ENCODE measurements at regions of chr18 and their contacts with region 1.

Region 1: GRCh38 chr18:12271376-12272235 is 17.4 kb downstream of the CIDEA start:
- DNase-seq: peak; percentile 55
- H3K4me3 Mint-ChIP-seq: peak overlapping the region; percentile 43
- H3K27ac Mint-ChIP-seq: no peak overlapping the region
- H3K4me1 Mint-ChIP-seq: peaks cover 2% of the 10 kb centered on the region
- H3K27me3 Mint-ChIP-seq: peaks cover 14% of the 10 kb centered on the region

Region 2: DNA sequence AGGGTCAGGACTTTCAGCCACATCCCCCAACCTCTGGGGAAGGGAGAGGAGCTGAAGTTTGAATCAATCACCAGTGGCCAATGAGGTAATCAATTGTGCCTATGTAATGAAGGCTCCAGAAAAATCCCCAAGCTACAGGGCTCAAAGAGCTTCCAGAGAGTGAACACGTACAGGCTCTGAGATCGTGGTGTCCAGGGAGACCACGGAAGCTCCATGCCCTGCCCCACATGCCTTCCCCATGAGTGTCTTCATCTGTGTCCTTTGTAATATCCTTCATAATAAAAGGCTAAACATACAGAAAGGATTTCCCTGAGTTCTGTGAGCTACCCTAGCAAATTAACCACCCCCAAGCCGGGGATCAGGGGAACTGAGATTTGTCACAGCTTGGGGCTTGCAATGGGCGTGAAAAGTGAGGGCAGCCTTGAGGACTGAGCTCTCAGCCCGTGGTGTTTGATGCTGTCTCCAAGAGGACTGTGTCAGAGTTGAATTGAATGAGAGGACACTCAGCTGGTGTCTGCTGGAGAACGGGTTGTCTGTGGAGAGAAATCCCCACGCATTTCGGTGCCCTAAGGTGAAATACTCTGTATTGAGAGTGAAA is 10.9 kb after region 1 on chr18:
- CTCF ChIA-PET with region 1: interaction called, 13 read pairs
- POLR2A ChIA-PET with region 1: no interaction called
- DNase-seq: no peak
- H3K4me3 Mint-ChIP-seq: no peak overlapping the region
- H3K27ac Mint-ChIP-seq: no peak overlapping the region
- H3K4me1 Mint-ChIP-seq: no peaks in the 10 kb centered on the region
- H3K27me3 Mint-ChIP-seq: peaks cover 19% of the 10 kb centered on the region

Region 3: DNA sequence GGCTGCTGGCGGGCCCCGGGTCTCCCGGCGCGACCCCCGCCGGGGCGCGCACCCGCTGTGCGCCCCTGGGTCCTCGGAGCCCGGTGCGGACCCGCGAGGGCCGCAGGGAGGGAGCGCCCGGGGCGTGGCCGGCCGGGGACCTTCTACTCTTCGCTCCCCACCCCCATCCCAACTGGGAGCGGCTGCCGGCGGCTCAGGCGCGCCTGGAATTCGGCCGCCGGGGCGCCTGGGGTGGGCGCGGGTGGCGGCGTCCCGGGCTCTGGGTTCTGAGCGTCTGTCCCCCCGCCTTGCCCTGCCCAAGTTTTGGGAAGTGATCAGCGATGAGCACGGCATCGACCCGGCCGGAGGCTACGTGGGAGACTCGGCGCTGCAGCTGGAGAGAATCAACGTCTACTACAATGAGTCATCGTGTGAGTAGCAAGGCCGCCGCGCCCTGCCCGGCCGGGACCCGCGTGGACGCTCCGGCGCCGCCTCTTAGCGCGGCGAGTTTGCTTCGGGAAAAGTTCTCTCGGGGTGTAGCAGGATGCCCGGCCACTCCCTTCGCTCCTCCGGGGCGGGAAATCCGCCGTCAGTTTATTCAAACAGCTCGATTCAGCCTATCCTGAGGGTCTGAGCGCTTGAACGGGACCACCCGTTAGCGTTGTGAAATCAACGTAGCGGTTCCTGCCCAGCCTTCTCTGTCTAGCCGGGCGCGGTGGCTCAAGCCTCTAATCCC is 36.9 kb after region 1 on chr18:
- CTCF ChIA-PET with region 1: no interaction called
- POLR2A ChIA-PET with region 1: no interaction called
- DNase-seq: peak; percentile 36
- H3K4me3 Mint-ChIP-seq: peak overlapping the region; percentile 69
- H3K27ac Mint-ChIP-seq: no peak overlapping the region
- H3K4me1 Mint-ChIP-seq: peaks cover 20% of the 10 kb centered on the region
- H3K27me3 Mint-ChIP-seq: peaks cover 48% of the 10 kb centered on the region

Measured in activated CD4-positive, alpha-beta memory T cell treated with anti-CD3 and anti-CD28 coated beads, Interleukin-2, amount 10 ng/mL, durations not matched to agents 7 days and 5 days (primary cell).